Ascending aorta (tissue), 2 donors: ENCODE measurements at regions of chr13 and their contacts with region 1.

Region 1: DNA sequence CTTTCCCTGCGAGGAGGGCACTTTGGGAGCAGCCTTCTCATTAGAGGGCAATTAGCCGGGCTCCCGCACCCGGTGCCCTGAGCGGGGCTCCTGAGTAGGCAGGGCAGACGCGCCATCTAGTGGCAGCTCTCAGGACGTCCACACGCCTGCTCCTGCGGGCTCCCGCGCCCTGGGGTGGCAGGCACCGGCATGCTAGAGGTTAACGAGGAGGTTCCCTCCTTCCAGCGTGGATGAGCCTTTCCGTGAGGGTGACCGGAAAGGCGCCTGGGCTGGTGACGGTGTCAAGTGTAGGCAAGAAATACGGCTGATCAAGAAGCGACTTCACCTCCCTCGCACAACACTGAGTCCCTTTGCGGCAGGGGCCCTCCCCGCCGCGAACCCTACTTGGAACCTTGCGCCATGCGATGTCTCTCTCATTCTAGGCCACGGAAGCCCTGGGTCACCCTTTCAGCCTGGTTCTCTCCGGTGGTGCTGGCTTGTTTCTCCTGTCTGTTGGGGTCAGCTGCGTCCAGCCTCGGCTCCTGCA is 67.7 kb downstream of the ALOX5AP start:
- DNase-seq: peak; percentile 47 to 95
- H3K4me3 ChIP-seq: peak overlapping the region; percentile 43 to 54
- H3K27ac ChIP-seq: peak overlapping the region in 1 of 2 donors; percentile 60
- H3K4me1 ChIP-seq: peaks cover 0 to 13% of the 10 kb centered on the region in 2 donors
- H3K27me3 ChIP-seq: no peaks in the 10 kb centered on the region
- CTCF ChIP-seq: peak; percentile 89 to 97 (median 91)

Region 2: DNA sequence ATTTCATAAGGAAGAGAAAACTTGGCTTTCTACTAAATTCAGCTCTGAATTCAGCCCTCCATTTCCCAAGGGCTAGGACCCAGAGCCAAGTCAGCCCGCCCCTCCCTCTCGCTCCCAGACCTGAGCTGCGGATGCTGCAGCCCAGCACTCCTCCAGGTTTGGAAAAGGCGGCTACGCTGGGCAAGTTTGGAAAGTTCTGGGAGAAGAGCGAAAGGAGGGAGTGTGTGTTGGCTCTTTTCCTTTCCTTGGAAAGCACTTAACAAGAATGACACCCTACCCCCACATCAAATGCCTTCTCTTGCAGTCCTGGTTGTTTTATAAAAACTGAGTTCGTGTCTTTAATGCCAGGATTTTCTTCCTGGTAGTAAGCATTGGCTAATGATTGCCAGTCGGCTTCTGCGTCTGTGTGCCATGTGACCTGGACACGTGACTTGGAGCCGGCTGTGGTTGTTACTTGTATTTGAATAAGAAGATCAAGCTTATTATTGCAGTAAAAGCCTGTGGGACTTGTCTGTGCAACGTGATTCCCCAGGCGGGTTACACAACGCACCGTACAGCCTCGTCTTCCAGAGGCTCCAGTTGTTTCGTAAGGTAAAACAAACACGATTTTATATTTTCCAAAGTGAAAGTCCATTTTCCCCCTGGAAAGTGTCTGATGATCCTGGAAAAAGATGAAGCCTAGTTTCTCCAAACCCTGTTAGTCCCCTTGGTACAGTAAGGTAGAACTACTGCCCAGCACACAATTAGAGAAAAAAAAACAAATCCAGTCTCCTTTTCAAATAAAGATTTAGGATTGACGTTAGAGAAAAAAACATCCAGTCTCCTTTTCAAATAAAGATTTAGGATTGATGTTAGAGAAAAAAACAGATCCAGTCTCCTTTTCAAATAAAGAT is 407.6 kb before region 1 on chr13:
- intact Hi-C with region 1: loop called (anchors 5 kb)
- DNase-seq: peak; percentile 85 to 95
- H3K4me3 ChIP-seq: peak overlapping the region; percentile 65 to 86
- H3K27ac ChIP-seq: peak overlapping the region; percentile 58 to 89
- H3K4me1 ChIP-seq: no peaks in the 10 kb centered on the region
- H3K27me3 ChIP-seq: no peaks in the 10 kb centered on the region
- CTCF ChIP-seq: no peak

Region 3: DNA sequence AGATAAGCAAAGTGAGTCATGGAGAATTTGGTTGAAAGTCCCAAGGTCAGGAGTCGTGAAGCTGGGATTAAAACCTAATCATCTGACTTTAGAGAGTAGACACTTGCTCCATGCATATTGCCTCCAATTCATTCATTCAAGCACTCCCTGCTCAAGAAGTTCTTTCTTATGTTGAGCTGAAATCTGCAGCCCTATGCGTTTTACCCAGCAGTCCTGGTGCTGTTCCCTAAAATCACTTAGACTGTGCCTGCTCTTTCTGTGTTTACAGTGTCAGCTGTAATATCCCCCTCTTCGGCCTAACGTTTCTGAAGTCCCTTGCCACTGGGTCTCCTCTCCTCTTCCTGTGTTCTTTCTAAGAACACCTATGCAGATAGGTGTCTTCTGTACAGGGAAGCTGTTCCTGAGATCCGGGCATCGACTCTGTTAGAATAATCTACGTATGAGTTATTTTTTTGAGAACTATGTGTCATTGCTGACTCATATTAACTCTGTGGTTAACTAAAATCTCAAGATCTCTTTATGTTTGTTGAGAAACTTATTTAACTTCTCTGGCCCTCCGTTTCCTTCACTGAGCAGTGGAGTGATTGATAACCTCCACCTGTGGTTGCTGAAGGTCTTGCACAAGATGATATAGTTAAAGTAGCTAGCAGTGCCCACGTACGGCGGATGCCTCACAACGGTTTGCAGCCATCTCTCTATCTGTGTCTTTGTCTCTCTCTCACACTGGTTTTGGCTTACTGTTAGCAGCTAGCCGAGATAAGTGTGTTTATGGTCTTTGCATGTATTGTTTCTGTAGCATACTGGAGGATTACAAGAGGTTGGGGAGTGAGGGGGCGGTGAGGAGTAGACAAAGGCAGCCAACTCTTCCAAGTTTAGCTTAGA is 63.0 kb before region 1 on chr13:
- intact Hi-C with region 1: loop called (anchors 5 kb)
- DNase-seq: no peak
- H3K4me3 ChIP-seq: no peak overlapping the region
- H3K27ac ChIP-seq: peak overlapping the region; percentile 3 to 20
- H3K4me1 ChIP-seq: peaks cover 0 to 21% of the 10 kb centered on the region in 2 donors
- H3K27me3 ChIP-seq: no peaks in the 10 kb centered on the region
- CTCF ChIP-seq: no peak

Region 4: DNA sequence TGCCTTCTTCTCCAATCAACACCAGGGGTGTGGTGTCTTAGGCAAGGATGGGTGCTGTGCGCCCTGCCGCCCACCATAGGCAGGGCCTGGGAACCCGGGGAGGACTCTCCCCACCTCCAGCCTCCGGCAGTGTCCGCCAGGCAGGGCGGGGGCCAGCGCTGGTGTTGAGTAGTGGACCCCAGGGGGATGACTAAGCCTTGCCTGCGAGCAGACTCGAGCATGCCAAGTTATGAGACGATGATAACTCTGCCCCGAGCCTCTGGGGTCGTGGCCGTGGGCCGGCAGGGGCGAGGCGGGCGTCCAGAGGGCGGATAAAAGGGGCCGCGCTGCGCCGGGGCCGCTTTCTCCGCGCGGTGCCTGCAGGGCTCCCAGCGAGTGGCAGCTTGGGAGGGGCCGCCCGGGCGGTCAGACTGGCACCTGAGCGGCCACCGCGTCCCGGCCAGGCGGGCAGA is 102.9 kb after region 1 on chr13 and contains the start of gene MEDAG:
- intact Hi-C with region 1: loop called (anchors 5 kb)
- DNase-seq: peak; percentile 76 to 96
- H3K4me3 ChIP-seq: peak within 1 kb of the TSS; percentile 56 to 81
- H3K27ac ChIP-seq: peak within 1 kb of the TSS; percentile 95 to 98
- H3K4me1 ChIP-seq: peaks cover 0 to 21% of the 10 kb centered on the region in 2 donors
- H3K27me3 ChIP-seq: no peaks in the 10 kb centered on the region
- CTCF ChIP-seq: no peak
- total RNA-seq, gene MEDAG: 98.8 TPM

Region 5: GRCh38 chr13:31044377-31045285 is 241.6 kb after region 1 on chr13:
- intact Hi-C with region 1: loop called (anchors 2 kb)
- DNase-seq: peak; percentile 28 to 88
- H3K4me3 ChIP-seq: no peak overlapping the region
- H3K27ac ChIP-seq: peak overlapping the region in 1 of 2 donors; percentile 23
- H3K4me1 ChIP-seq: peaks cover 0 to 2% of the 10 kb centered on the region in 2 donors
- H3K27me3 ChIP-seq: no peaks in the 10 kb centered on the region
- CTCF ChIP-seq: peak; percentile 68 to 96 (median 89)